B cell (primary cell): ENCODE measurements at regions of chr3 and their contacts with region 1.

Region 1: GRCh38 chr3:72523429-72524151 is 324.7 kb downstream of the SHQ1 start:
- DNase-seq: peak; percentile 83
- ATAC-seq: peak; percentile 94
- H3K4me3 ChIP-seq: peak overlapping the region in 2 of 5 experiments; percentile 8 to 24
- H3K4me3 Mint-ChIP-seq: peak overlapping the region; percentile 75
- H3K27ac ChIP-seq: peak overlapping the region; percentile 37 to 49
- H3K27ac Mint-ChIP-seq: peak overlapping the region; percentile 89
- H3K4me1 ChIP-seq: peaks cover 29 to 34% of the 10 kb centered on the region in 2 donors
- H3K4me1 Mint-ChIP-seq: peaks cover 41% of the 10 kb centered on the region
- H3K27me3 ChIP-seq: no peaks in the 10 kb centered on the region
- H3K27me3 Mint-ChIP-seq: no peaks in the 10 kb centered on the region
- CTCF ChIP-seq: no peak

Region 2: DNA sequence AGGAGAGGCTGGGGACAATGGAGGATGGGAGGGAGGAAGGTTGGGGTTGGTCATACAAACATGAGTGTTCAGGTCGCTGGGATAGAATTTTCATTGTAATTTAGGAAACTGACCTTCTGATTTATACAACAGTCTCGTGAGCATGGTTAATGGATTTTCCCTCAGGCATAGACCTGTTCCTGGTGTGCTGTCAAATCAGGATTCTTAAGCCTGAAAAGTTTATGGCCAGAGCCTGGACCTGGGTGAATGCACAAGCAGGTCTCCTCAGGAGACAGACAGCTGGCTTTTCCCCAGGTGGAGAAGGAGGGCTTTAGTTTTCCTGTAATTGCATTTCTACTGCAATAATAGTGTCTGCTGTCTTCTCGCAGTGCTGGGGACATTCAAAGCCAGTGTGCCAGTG is 13.3 kb before region 1 on chr3:
- CTCF ChIA-PET with region 1: no interaction called
- POLR2A ChIA-PET with region 1: no interaction called
- intact Hi-C with region 1: no loop called
- DNase-seq: no peak
- ATAC-seq: no peak
- H3K4me3 ChIP-seq: no peak overlapping the region
- H3K4me3 Mint-ChIP-seq: no peak overlapping the region
- H3K27ac ChIP-seq: no peak overlapping the region
- H3K27ac Mint-ChIP-seq: no peak overlapping the region
- H3K4me1 ChIP-seq: no peaks in the 10 kb centered on the region
- H3K4me1 Mint-ChIP-seq: no peaks in the 10 kb centered on the region
- H3K27me3 ChIP-seq: peaks cover 0 to 2% (median 0%) of the 10 kb centered on the region in 4 experiments
- H3K27me3 Mint-ChIP-seq: peaks cover 5% of the 10 kb centered on the region
- CTCF ChIP-seq: no peak

Region 3: DNA sequence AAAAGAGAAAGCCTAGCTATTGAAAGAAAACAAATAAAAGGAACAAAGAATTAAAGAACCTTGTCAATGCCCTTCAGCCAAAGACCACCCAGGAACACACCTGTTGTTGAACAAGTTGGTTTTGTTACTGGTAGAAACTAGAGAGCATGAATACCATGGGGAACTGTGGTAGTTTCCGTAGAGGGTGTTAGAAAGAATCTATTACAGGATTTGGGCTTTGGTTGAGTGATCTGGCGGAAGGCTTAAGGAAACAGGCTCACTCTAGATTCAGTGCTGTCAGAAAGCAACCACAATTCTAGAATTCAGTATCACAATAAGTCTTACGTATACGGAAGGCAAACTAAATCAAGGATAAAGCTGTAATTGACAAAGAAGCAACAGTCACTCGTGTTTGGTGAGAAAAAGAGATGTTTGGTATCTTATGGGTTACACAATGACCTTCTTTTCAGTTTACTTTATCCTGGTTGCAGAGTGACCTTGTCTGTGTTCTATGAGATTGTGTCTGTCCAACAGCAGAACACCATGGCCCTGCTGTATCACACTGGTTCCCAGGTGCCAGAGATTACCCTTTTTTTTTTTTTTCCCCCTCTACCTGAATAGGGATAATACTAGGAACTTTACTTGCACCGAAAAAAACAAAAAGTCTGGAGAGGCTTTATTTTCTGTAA is 58.8 kb after region 1 on chr3:
- CTCF ChIA-PET with region 1: no interaction called
- POLR2A ChIA-PET with region 1: no interaction called
- intact Hi-C with region 1: loop called (anchors 10 kb)
- DNase-seq: peak; percentile 74
- ATAC-seq: peak; percentile 86
- H3K4me3 ChIP-seq: peak overlapping the region in 1 of 5 experiments; percentile 15
- H3K4me3 Mint-ChIP-seq: peak overlapping the region; percentile 38
- H3K27ac ChIP-seq: no peak overlapping the region
- H3K27ac Mint-ChIP-seq: no peak overlapping the region
- H3K4me1 ChIP-seq: peaks cover 24 to 26% of the 10 kb centered on the region in 2 donors
- H3K4me1 Mint-ChIP-seq: peaks cover 32% of the 10 kb centered on the region
- H3K27me3 ChIP-seq: peaks cover 0 to 47% (median 28%) of the 10 kb centered on the region in 4 experiments
- H3K27me3 Mint-ChIP-seq: peaks cover 60% of the 10 kb centered on the region
- CTCF ChIP-seq: no peak